Activated CD4-positive, alpha-beta T cell treated with anti-CD3 and anti-CD28 coated beads for 36 hours (primary cell): ENCODE measurements at regions of chr3 and their contacts with region 1.

Region 1: DNA sequence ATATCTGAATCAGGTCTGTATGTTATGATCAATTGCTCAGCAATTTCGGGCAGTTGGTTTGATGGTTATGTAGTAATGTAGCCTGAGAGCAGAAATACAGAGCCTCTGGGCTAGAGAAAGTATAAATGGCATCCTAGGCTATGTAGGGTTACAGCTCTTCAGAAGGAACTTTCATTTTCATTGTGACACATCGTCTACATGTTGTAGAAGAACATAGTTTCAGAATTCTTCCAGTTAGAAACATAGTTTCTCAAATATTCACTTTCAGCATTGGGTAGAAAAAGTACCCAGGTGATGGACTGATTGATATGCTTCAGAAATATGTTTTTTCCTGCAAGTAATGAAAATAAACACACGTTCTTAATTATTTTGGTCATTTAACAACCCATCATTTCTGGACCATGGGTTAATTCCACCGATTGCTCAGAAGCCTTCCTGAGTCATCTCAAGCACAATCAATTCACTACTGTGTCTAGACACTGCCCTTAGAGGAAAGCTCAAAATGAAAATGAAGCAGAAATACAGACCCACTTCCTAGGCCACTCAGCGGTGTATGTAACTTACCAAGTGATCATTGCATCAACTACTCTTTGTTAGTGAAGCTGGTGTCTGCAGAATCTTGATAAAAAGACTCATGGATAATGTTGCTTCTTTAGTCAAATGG is 88.8 kb upstream of the TSEN2 start:
- DNase-seq: peak; percentile 43
- ATAC-seq: peak; percentile 96
- H3K4me3 Mint-ChIP-seq: peak overlapping the region; percentile 23
- H3K27ac Mint-ChIP-seq: peak overlapping the region; percentile 34
- H3K4me1 Mint-ChIP-seq: peaks cover 24% of the 10 kb centered on the region
- H3K27me3 Mint-ChIP-seq: peaks cover 25% of the 10 kb centered on the region

Region 2: GRCh38 chr3:12349895-12350813 is 45.3 kb before region 1 on chr3:
- CTCF ChIA-PET with region 1: interaction called, 3 read pairs
- POLR2A ChIA-PET with region 1: no interaction called
- intact Hi-C with region 1: loop called (anchors 1 to 2 kb)
- DNase-seq: no peak
- ATAC-seq: no peak
- H3K4me3 Mint-ChIP-seq: no peak overlapping the region
- H3K27ac Mint-ChIP-seq: no peak overlapping the region
- H3K4me1 Mint-ChIP-seq: peaks cover 11% of the 10 kb centered on the region
- H3K27me3 Mint-ChIP-seq: peaks cover 17% of the 10 kb centered on the region

Region 3: DNA sequence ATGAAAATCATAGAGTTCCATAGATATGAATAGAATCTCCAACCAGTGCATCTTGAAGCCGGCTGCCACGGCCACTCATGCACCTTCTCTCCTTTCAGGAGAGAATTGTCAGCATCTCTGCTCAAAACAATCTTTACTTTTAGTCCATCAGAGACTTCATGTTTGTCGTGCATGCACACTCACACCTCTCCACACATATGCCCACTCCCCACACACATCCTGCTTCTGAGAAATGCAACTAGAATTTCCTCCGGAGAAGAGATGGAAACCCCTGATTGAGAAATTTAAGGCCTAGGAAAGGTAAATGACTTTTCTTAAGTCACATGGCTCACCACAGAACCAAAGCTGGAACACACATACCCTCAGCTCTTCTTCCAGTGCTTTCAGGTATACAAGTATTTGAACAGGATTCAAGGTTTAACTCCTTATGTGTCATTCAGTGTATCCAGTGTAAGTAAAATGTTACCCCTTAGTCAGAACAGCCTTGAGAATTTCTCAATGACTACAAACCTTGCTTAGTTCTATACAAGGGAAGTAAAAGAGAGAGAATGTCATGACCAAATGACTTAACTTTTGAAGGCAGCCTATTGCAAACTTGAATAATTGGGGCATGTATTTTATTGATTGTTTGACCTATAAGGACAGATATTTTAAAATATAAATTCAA is 19.7 kb after region 1 on chr3:
- CTCF ChIA-PET with region 1: interaction called, 5 read pairs
- POLR2A ChIA-PET with region 1: no interaction called
- intact Hi-C with region 1: loop called in 1 of 2 experiments (anchors 1 kb)
- DNase-seq: peak; percentile 13
- ATAC-seq: peak; percentile 90
- H3K4me3 Mint-ChIP-seq: no peak overlapping the region
- H3K27ac Mint-ChIP-seq: no peak overlapping the region
- H3K4me1 Mint-ChIP-seq: peaks cover 11% of the 10 kb centered on the region
- H3K27me3 Mint-ChIP-seq: peaks cover 6% of the 10 kb centered on the region

Region 4: DNA sequence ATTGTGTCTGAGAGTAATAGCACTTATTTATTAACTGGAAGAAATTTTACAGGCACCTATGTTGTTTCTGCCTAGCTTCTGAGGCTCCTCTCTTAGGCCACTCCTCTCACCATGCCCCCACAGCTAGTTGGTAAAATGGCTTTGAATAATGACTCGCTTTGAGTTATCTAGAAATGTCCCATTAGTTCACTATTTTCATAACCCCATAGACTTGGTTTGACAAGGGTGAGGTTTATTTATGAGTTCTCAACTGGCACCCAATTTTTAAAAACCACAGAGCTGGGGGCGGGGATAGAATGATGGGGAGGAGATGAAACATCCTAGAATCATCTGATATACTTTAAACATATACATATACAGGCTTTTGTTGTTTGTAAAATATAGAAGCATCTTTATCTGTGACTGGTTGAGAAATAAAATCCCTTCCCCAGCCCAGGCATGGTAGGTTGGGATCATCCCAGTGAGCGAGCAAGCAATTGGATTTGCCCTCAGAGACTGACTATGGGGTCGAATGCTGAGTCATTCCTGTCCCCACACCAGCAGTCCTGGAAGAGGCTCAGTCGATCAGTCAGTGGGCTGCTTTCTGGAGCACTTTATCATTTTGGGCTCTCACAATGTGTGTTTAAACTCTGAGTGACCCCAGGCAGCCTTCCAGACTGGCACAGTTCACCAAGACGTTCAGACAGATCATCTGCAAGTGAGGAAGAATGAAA is 28.6 kb after region 1 on chr3:
- CTCF ChIA-PET with region 1: no interaction called
- POLR2A ChIA-PET with region 1: no interaction called
- intact Hi-C with region 1: loop called in 1 of 2 experiments (anchors 1 kb)
- DNase-seq: peak; percentile 58
- ATAC-seq: peak; percentile 81
- H3K4me3 Mint-ChIP-seq: no peak overlapping the region
- H3K27ac Mint-ChIP-seq: peak overlapping the region; percentile 17
- H3K4me1 Mint-ChIP-seq: peaks cover 21% of the 10 kb centered on the region
- H3K27me3 Mint-ChIP-seq: no peaks in the 10 kb centered on the region

Region 5: DNA sequence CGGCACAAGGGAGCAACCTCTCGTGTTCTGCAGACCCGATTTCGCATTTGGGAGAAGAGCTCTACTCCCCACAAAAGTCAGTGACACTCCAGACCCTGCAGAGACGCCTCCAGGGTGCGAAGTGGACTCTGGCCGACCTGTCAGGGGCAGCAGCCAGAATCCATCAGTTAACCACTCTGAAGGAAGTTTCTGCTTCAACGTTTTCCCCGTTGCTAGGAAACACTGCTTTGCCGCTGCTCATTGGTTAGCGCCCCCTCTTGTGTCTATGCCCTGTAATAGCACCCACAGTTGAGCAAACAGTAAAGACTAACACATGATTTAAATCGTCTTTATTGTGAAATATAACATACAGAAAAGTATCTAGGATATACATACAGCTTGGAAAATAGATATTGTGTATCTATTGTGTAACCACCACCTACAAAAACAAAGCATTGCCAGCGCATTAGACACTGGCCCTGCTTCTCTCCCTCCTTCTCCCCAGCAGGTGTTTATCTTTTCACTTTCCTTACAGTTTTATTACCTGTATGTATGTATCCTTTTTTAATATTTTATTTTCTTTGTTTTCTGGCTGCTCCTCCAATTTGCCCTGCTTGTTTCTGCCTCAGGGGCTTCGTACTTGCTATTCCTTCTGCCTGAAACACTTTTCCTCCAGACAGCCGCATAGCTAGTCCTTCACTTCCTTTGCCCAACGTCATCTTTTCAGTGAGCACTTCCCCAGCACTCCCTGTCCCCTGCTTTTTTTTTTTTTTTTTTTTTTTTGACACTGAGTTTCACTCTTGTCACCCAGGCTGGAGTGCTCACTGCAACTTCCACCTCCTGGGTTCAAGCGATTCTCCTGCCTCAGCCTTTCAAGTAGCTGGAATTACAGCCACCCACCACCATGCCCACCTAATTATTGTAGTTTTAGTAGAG is 324.8 kb after region 1 on chr3:
- CTCF ChIA-PET with region 1: no interaction called
- POLR2A ChIA-PET with region 1: no interaction called
- intact Hi-C with region 1: no loop called
- DNase-seq: peak; percentile 80
- ATAC-seq: peak; percentile 74
- H3K4me3 Mint-ChIP-seq: peak overlapping the region; percentile 36
- H3K27ac Mint-ChIP-seq: no peak overlapping the region
- H3K4me1 Mint-ChIP-seq: peaks cover 9% of the 10 kb centered on the region
- H3K27me3 Mint-ChIP-seq: no peaks in the 10 kb centered on the region